HepG2 (cell line): ENCODE measurements at regions of chr2 and their contacts with region 1.

Region 1: GRCh38 chr2:111120253-111121027 is at the start of gene BCL2L11:
- DNase-seq: peak; percentile 89
- ATAC-seq: peak; percentile 67
- H3K4me3 ChIP-seq: peak within 1 kb of the TSS; percentile 76 to 93 (median 86)
- H3K27ac ChIP-seq: peak within 1 kb of the TSS; percentile 82
- H3K4me1 ChIP-seq: peaks cover 43% of the 10 kb centered on the region
- H3K27me3 ChIP-seq: peaks cover 0 to 3% of the 10 kb centered on the region in 2 experiments; a peak in 1 of 5 replicates
- CTCF ChIP-seq: peak; percentile 79
- EP300 ChIP-seq: peak; percentile 50 to 59; a peak in 2 of 4 replicates
- POLR2A ChIP-seq: peak in 1 of 2 experiments; percentile 92; a peak in 2 of 4 replicates
- RAD21 ChIP-seq: peak; percentile 74
- total RNA-seq, gene BCL2L11: 9.7 and 9.9 TPM in 2 replicates

Region 2: DNA sequence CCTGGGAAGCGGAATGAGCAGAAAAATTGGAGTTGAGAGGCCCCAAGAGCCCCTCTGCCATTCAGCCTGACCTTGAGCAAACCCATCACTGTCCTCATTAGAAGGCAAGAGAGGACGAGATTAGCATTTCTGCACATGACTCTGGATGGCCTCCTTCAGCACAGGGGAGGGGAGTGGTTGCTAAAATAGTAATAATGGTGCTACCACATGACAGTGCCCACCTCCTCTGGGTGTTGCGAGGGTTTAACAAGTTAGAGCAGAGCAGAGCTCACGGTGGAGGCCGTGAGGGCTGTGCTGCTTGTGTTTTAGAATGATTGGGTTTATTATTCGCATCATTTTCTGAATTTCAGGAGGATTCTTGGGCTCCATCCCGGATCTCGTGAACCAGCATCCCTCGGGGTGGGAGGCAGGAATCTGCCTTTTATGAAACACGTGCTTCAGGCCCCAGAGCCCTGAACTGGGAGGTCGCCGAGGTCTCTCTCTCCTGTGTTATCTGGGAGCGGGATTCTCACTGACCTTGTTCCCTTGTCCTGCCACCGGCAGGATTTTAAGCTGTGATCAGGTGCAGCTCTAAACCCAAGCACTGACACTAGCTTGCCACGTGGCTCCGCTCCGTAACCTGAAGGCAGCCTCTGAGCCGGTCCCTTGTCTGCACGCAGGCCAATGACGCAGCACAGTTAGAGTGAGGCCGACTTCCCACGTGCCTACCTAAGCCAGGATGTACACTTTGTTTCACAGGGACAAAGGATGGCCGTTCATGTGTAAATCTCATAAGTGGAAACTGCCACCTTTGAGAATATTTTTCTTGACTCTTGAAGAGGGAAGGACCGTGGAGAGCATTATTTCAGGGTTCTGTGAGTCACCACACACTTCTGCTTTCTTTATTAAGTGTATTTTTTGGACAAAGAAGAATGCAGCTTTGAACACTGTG is 245.7 kb before region 1 on chr2:
- CTCF ChIA-PET with region 1: no interaction called
- POLR2A ChIA-PET with region 1: no interaction called
- in situ Hi-C with region 1: no loop called
- intact Hi-C with region 1: no loop called
- DNase-seq: no peak
- ATAC-seq: peak; percentile 25; the same call in 2 of the 3 replicates
- H3K4me3 ChIP-seq: no peak overlapping the region
- H3K27ac ChIP-seq: no peak overlapping the region
- H3K4me1 ChIP-seq: no peaks in the 10 kb centered on the region
- H3K27me3 ChIP-seq: peaks cover 0 to 23% of the 10 kb centered on the region in 2 experiments; a peak in 3 of 5 replicates
- CTCF ChIP-seq: no peak
- EP300 ChIP-seq: no peak
- POLR2A ChIP-seq: no peak
- RAD21 ChIP-seq: no peak

Region 3: GRCh38 chr2:111042772-111043771 is 77.4 kb before region 1 on chr2:
- CTCF ChIA-PET with region 1: no interaction called
- POLR2A ChIA-PET with region 1: no interaction called
- in situ Hi-C with region 1: no loop called
- intact Hi-C with region 1: no loop called
- DNase-seq: no peak
- ATAC-seq: no peak; the same call in 2 of the 3 replicates
- H3K4me3 ChIP-seq: no peak overlapping the region
- H3K27ac ChIP-seq: no peak overlapping the region
- H3K4me1 ChIP-seq: no peaks in the 10 kb centered on the region
- H3K27me3 ChIP-seq: peaks cover 3 to 56% of the 10 kb centered on the region in 2 experiments; a peak in 4 of 5 replicates
- CTCF ChIP-seq: no peak
- EP300 ChIP-seq: no peak
- POLR2A ChIP-seq: no peak
- RAD21 ChIP-seq: no peak

Region 4: DNA sequence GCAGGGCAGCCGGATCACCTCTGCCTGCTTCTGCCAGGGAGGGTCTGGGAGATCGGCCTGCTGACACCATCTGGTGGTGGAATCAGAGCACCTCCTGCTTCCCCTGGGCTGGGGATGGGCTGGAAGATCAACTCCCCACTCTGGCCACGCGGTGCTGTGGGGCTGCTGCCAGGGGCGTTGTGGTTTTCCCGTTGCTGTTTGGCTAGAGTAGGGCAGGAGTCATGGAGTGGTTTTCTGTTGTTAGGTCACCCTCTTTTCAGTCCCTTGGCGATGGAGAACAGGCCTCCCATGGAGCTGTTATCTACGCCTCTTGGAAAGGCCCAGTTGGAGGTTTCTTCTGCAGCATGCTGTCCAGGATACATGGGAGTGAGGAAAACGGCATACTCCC is 15.5 kb after region 1 on chr2:
- CTCF ChIA-PET with region 1: interaction called, 9 read pairs
- POLR2A ChIA-PET with region 1: interaction called, 12 read pairs
- in situ Hi-C with region 1: no loop called
- intact Hi-C with region 1: loop called (anchors 2 kb)
- DNase-seq: peak; percentile 29
- ATAC-seq: peak; percentile 88
- H3K4me3 ChIP-seq: no peak overlapping the region
- H3K27ac ChIP-seq: no peak overlapping the region
- H3K4me1 ChIP-seq: peaks cover 27% of the 10 kb centered on the region
- H3K27me3 ChIP-seq: no peaks in the 10 kb centered on the region
- CTCF ChIP-seq: peak; percentile 62
- EP300 ChIP-seq: no peak
- POLR2A ChIP-seq: no peak
- RAD21 ChIP-seq: peak; percentile 51; the same call in 1 of the 2 replicates

Region 5: GRCh38 chr2:111155610-111156009 is 35.2 kb after region 1 on chr2:
- CTCF ChIA-PET with region 1: no interaction called
- POLR2A ChIA-PET with region 1: interaction called, 13 read pairs
- in situ Hi-C with region 1: no loop called
- intact Hi-C with region 1: loop called (anchors 2 kb)
- DNase-seq: peak; percentile 81
- ATAC-seq: peak; percentile 86
- H3K4me3 ChIP-seq: no peak overlapping the region
- H3K27ac ChIP-seq: peak overlapping the region; percentile 36
- H3K4me1 ChIP-seq: peaks cover 52% of the 10 kb centered on the region
- H3K27me3 ChIP-seq: no peaks in the 10 kb centered on the region
- CTCF ChIP-seq: peak; percentile 24; the same call in 1 of the 2 replicates
- EP300 ChIP-seq: no peak
- POLR2A ChIP-seq: no peak
- RAD21 ChIP-seq: no peak

Region 6: DNA sequence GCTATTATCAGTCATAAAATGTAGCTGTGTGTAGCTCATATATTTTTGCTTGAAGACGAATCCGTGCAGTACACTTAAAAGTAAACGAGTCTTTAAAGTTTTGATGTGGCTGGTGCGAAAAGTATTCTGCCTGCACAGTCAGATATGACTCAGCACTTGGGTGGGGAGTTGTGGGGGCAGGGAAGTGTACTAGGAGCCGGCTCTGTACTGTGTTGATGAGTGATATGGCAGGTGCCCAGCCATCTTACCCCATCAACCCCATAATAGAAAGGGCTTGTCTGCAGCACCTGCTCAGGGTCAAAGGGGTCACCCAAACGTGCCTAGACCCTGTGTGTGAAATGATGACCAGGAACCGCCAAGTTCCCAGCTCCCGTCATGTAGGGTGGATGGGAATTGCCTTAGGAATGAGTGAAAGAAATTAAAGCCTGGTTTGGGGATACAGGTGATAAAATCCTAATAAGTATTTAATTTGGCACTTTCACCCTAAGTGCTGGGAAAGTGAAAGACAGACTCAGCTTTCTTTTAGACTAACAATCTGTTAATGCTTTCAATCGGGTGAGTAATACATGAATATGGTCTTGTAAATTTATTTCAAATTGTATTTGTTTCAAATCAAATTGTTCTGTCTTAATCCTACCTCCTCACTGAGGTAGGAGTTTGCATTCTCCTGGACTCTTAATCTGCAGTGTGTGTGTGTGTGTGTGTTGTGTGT is 48.2 kb after region 1 on chr2:
- CTCF ChIA-PET with region 1: no interaction called
- POLR2A ChIA-PET with region 1: interaction called, 10 read pairs
- in situ Hi-C with region 1: no loop called
- intact Hi-C with region 1: no loop called
- DNase-seq: no peak
- ATAC-seq: no peak
- H3K4me3 ChIP-seq: no peak overlapping the region
- H3K27ac ChIP-seq: no peak overlapping the region
- H3K4me1 ChIP-seq: no peaks in the 10 kb centered on the region
- H3K27me3 ChIP-seq: no peaks in the 10 kb centered on the region
- CTCF ChIP-seq: no peak
- EP300 ChIP-seq: no peak
- POLR2A ChIP-seq: no peak
- RAD21 ChIP-seq: no peak

Region 7: DNA sequence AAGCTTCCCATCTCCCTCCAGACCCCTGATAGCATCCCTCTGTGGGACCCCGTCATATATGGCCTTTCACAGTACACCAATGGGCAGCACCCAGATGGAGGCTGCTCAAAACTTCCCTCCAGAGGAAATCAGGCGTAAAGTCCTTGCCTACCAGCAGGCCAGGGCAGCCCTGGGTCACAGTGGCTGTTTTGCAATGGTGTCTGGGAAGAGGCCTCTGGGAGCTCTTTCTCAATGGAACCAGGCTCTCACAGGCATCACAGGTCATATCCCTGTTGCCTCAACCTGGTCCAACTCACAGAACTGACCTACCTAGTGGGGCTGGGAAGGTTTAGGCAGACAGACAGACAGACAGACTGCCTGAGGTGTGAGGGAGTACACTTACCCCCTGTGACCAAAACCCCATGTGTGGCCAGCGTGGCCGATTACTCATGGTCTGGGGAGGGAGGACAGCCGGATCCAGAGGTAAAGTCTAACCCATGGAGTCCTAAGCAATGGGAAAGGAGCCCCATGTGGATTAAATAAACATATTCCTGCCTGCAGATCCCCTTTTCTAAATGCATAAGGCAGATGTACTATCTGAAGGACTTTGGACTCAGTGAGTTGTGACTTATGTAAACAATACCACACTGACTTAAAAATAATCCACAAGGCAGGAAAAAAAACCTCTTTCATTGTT is 58.4 kb after region 1 on chr2:
- CTCF ChIA-PET with region 1: no interaction called
- POLR2A ChIA-PET with region 1: interaction called, 14 read pairs
- in situ Hi-C with region 1: no loop called
- intact Hi-C with region 1: no loop called
- DNase-seq: peak; percentile 94
- ATAC-seq: peak; percentile 85
- H3K4me3 ChIP-seq: peak overlapping the region in 2 of 3 experiments; percentile 8 to 56; a peak in 3 of 6 replicates
- H3K27ac ChIP-seq: peak overlapping the region; percentile 71
- H3K4me1 ChIP-seq: peaks cover 49% of the 10 kb centered on the region
- H3K27me3 ChIP-seq: 0 out of 5 replicates have a peak, but pooled peaks cover 0 to 3% of the 10 kb centered on the region in 2 experiments
- CTCF ChIP-seq: peak; percentile 28
- EP300 ChIP-seq: peak in 1 of 2 experiments; percentile 7; a peak in 1 of 4 replicates
- POLR2A ChIP-seq: peak in 1 of 2 experiments; percentile 37; a peak in 1 of 4 replicates
- RAD21 ChIP-seq: peak; percentile 43; the same call in 1 of the 2 replicates

Region 8: DNA sequence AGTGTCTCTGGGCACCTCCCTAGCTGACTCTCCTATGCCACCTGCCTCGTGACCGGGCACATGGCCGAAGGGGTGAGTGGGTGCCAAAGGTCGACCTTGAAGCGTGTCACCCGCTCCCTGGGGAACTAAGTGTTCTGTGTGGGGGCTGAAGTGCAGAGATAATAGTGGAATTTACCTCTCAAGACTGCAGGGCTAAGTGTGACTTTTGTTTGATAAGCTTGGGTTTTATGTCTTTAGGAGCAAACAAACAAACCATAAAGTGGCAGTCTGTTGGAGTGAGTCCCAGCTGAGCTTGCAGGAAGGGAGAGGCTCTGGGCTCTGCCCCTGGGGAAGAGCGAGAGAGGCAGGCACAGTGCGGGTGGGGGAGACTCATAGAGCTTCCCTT is 65.2 kb after region 1 on chr2:
- CTCF ChIA-PET with region 1: no interaction called
- POLR2A ChIA-PET with region 1: interaction called, 10 read pairs
- in situ Hi-C with region 1: no loop called
- intact Hi-C with region 1: no loop called
- DNase-seq: no peak
- ATAC-seq: peak; percentile 23
- H3K4me3 ChIP-seq: no peak overlapping the region
- H3K27ac ChIP-seq: no peak overlapping the region
- H3K4me1 ChIP-seq: peaks cover 18% of the 10 kb centered on the region
- H3K27me3 ChIP-seq: no peaks in the 10 kb centered on the region; a peak in 1 of 5 replicates
- CTCF ChIP-seq: no peak
- EP300 ChIP-seq: no peak
- POLR2A ChIP-seq: no peak
- RAD21 ChIP-seq: no peak

Region 9: GRCh38 chr2:111698743-111699554 is 578.5 kb after region 1 on chr2:
- CTCF ChIA-PET with region 1: interaction called, 4 read pairs
- POLR2A ChIA-PET with region 1: interaction called, 17 read pairs
- in situ Hi-C with region 1: loop called (anchors 5 kb)
- intact Hi-C with region 1: loop called (anchors 10 kb)
- DNase-seq: peak; percentile 94
- ATAC-seq: peak; percentile 91
- H3K4me3 ChIP-seq: peak overlapping the region; percentile 38 to 62 (median 43); a peak in 5 of 6 replicates
- H3K27ac ChIP-seq: peak overlapping the region; percentile 37
- H3K4me1 ChIP-seq: peaks cover 41% of the 10 kb centered on the region
- H3K27me3 ChIP-seq: no peaks in the 10 kb centered on the region
- CTCF ChIP-seq: peak; percentile 95
- EP300 ChIP-seq: peak; percentile 12 to 74; a peak in 2 of 4 replicates
- POLR2A ChIP-seq: peak; percentile 26 to 44; a peak in 1 of 4 replicates
- RAD21 ChIP-seq: peak; percentile 91